ENCODE measurements at regions of chr15 and their contacts with region 1.

Region 1: DNA sequence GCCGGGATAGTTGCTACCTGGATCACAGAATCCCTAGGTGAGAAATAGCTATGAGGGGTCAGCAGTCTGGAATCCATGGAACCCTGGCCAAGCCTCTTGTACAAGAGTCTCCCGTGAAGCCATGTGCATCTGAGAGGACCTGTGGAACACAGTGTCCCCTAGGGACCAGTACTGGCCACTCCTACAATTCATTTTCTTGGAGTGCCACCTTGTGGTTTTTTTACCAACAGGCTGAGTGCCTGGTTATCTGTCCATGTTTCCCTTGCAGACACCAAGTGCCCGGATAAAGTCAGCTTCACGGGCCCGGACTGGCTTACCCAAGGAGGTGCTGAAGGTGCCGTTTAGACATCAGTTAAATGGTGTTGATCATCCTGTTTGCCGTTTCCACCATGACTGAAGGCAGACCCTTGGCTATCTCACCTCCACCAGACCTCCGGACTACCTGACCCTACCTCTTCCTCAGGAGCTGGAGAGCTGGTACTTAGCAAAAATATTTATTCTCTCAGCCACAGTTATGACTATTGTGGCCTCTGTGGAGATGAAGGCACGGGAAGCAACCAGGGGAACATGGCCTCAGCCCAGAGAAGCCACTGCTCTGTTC is 93.9 kb downstream of the RBPMS2 start:
- DNase-seq: no peak
- H3K4me3 ChIP-seq: no peak overlapping the region
- H3K27me3 ChIP-seq: no peaks in the 10 kb centered on the region
- CTCF ChIP-seq: peak; percentile 79

Region 2: GRCh38 chr15:64423970-64424369 is 257.6 kb before region 1 on chr15:
- CTCF ChIA-PET with region 1: interaction called, 27 read pairs
- POLR2A ChIA-PET with region 1: interaction called, 3 read pairs
- DNase-seq: no peak
- H3K4me3 ChIP-seq: no peak overlapping the region
- H3K27me3 ChIP-seq: no peaks in the 10 kb centered on the region
- CTCF ChIP-seq: no peak

Region 3: GRCh38 chr15:64430000-64430735 is 251.4 kb before region 1 on chr15:
- CTCF ChIA-PET with region 1: interaction called, 27 read pairs
- POLR2A ChIA-PET with region 1: interaction called, 3 read pairs
- DNase-seq: peak; percentile 77
- H3K4me3 ChIP-seq: no peak overlapping the region
- H3K27me3 ChIP-seq: no peaks in the 10 kb centered on the region
- CTCF ChIP-seq: no peak

Region 4: DNA sequence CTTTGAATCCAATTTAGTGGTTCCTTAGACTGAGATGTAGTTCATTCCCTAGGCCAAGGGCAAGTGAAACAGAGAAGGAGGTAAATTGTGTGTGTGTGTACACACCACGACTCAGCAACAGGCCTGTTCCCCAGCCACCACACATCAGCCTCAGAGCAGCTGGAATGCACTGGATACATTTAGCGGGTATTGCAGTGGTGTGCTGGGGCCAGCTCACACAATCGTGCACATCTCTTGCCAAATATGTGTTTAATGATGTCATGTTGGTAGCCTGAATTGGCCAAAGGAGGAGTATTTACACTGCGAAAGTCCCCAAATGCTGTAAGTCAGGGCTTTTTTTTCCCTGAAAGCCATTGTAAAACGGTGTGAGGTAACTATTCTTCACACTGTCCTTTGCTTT is 11.6 kb after region 1 on chr15:
- CTCF ChIA-PET with region 1: interaction called, 34 read pairs
- POLR2A ChIA-PET with region 1: no interaction called
- DNase-seq: peak; percentile 74
- H3K4me3 ChIP-seq: no peak overlapping the region
- H3K27me3 ChIP-seq: no peaks in the 10 kb centered on the region
- CTCF ChIP-seq: no peak

Region 5: DNA sequence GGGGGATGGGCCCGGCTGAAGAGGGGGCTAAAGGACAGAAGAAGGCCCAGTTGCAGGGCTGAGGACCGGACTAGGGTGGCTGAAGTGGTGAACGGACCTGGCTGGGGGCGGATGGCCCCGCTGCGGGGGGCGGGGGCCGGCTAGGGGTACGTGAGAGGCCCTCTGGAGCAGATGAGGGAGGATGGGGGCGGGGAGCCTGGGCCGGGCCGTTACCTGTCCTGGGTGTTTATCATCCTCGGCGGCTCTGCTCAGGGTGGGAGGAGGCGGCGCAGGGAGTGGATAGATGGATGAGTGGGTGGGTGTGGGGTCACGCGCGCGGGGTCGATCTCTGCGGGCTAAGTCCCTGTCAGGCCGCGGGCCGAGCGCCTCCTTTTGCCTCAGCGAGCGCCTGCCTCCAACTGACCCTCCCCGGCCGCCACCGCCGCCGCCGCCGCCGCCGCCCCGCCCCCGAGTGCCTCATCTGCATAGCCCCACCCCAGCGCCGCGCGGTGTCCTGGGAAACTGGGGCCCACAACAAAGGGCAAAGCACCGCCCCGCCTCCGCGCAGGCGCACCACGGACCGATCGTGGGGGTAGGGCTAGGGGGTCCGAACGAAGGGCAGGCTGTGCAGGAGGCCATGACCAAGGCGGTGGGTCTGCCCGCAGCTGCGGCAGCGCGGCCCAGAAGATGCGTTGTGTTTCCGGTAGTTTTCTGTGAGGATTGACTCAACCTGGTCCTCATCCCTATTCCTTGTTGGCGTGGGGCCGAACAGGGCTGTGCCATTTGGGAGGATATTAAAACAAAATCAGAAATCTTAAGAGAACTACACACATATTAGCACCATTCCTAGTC is 21.5 kb after region 1 on chr15:
- CTCF ChIA-PET with region 1: interaction called, 34 read pairs
- POLR2A ChIA-PET with region 1: no interaction called
- DNase-seq: peak; percentile 35
- H3K4me3 ChIP-seq: peak overlapping the region; percentile 94
- H3K27me3 ChIP-seq: no peaks in the 10 kb centered on the region
- CTCF ChIP-seq: 0 out of 2 replicates have a peak, but pooled peaks have one; percentile 5

Region 6: GRCh38 chr15:64731012-64731806 is 49.7 kb after region 1 on chr15:
- CTCF ChIA-PET with region 1: interaction called, 395 read pairs
- POLR2A ChIA-PET with region 1: no interaction called
- DNase-seq: no peak
- H3K4me3 ChIP-seq: no peak overlapping the region
- H3K27me3 ChIP-seq: no peaks in the 10 kb centered on the region
- CTCF ChIP-seq: peak; percentile 87

Region 7: GRCh38 chr15:64809649-64810496 is 128.3 kb after region 1 on chr15:
- CTCF ChIA-PET with region 1: interaction called, 21 read pairs
- POLR2A ChIA-PET with region 1: no interaction called
- DNase-seq: no peak
- H3K4me3 ChIP-seq: no peak overlapping the region
- H3K27me3 ChIP-seq: peaks cover 1% of the 10 kb centered on the region; the same call in 1 of the 2 replicates
- CTCF ChIP-seq: peak; percentile 98